ENCODE measurements at regions of chr20 and their contacts with region 1.

Region 1: DNA sequence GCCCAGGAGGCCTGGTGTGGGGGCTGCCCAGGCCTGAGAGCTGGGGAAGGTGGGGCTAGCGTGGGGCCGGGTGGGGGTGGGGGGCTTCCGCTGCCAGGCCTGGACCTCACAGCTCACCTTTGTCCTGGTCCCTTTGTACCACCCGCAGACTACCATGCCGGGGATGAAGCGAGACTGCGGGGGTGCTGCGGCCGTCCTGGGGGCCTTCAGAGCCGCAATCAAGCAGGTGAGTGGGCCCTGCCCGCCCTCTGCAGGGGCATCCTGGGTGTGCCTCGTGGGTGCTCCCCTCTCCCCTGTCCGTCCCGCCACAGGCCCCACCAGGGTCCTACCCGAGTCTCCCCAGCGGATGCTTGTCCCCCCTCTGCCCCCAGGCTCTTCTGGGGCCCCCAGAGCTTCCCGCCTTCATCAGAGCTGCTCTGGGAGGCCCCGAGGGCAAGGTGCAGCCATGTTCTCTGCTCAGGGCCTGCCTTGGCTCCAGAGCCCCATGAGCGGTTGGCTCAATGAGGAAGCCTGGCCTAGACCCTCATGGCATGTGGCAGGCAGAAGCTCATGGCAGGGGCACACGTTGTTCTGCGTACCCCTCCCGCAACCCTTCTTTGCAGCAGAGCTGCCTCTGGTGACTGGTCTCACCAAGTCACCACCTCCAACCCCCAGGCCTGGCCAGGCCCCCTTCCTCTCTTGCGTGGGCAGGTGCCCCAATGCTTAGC is 14.5 kb downstream of the NPEPL1 start:
- DNase-seq: peak in 2 of 5 donors; percentile 7 to 14
- H3K4me3 ChIP-seq: no peak overlapping the region
- H3K27ac ChIP-seq: no peak overlapping the region
- H3K4me1 ChIP-seq: no peaks in the 10 kb centered on the region
- H3K27me3 ChIP-seq: no peaks in the 10 kb centered on the region
- CTCF ChIP-seq: no peak
- EP300 ChIP-seq: no peak
- POLR2A ChIP-seq: no peak

Region 2: GRCh38 chr20:58650776-58651558 is 56.2 kb before region 1 on chr20 and contains the start of gene STX16:
- intact Hi-C with region 1: no loop called
- DNase-seq: peak; percentile 85 to 92 (median 89)
- H3K4me3 ChIP-seq: peak within 1 kb of the TSS; percentile 83
- H3K27ac ChIP-seq: peak within 1 kb of the TSS; percentile 75 to 85
- H3K4me1 ChIP-seq: peaks cover 8% of the 10 kb centered on the region
- H3K27me3 ChIP-seq: no peaks in the 10 kb centered on the region
- CTCF ChIP-seq: peak; percentile 67 to 72 (median 67)
- EP300 ChIP-seq: no peak
- POLR2A ChIP-seq: peak; percentile 52
- total RNA-seq, gene STX16: 31.9 to 55.8 (median 46.5) TPM

Region 3: DNA sequence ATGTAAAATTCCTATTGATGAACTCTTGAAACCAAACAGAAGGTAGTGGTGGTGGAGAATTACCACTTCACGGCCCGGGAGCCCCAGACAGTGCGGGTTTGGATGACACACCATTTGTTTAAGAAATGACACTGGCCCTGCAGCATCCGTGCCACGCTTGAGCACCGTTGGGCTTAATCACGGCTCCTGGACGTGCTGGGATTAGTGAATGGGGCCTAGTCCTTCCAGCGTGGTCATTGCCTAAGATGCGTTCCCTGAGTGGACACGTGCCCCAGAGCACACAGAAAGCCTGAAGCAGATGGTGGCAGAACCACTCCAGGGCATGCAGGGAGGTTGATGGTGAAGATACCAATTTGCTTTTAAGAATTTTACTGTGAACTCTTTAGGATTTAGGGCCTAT is 41.5 kb before region 1 on chr20:
- intact Hi-C with region 1: loop called in 1 of 4 experiments (anchors 1 kb)
- DNase-seq: no peak
- H3K4me3 ChIP-seq: no peak overlapping the region
- H3K27ac ChIP-seq: no peak overlapping the region
- H3K4me1 ChIP-seq: no peaks in the 10 kb centered on the region
- H3K27me3 ChIP-seq: no peaks in the 10 kb centered on the region
- CTCF ChIP-seq: no peak
- EP300 ChIP-seq: no peak
- POLR2A ChIP-seq: no peak